HepG2 (cell line): ENCODE measurements at regions of chr9 and their contacts with region 1.

Region 1: GRCh38 chr9:116549061-116549664 is 137.9 kb upstream of the TRIM32 start:
- DNase-seq: peak; percentile 91
- ATAC-seq: peak; percentile 95
- H3K4me3 ChIP-seq: no peak overlapping the region
- H3K27ac ChIP-seq: peak overlapping the region; percentile 38
- H3K4me1 ChIP-seq: peaks cover 57% of the 10 kb centered on the region
- H3K27me3 ChIP-seq: no peaks in the 10 kb centered on the region
- CTCF ChIP-seq: 0 out of 2 replicates have a peak, but pooled peaks have one; percentile 20
- EP300 ChIP-seq: peak; percentile 71 to 75; a peak in 3 of 4 replicates
- POLR2A ChIP-seq: no peak
- RAD21 ChIP-seq: peak; percentile 51

Region 2: GRCh38 chr9:115367780-115368525 is 1181.2 kb before region 1 on chr9:
- CTCF ChIA-PET with region 1: no interaction called
- POLR2A ChIA-PET with region 1: no interaction called
- in situ Hi-C with region 1: no loop called
- intact Hi-C with region 1: no loop called
- DNase-seq: no peak
- ATAC-seq: no peak
- H3K4me3 ChIP-seq: no peak overlapping the region
- H3K27ac ChIP-seq: no peak overlapping the region
- H3K4me1 ChIP-seq: peaks cover 6% of the 10 kb centered on the region
- H3K27me3 ChIP-seq: no peaks in the 10 kb centered on the region
- CTCF ChIP-seq: no peak
- EP300 ChIP-seq: no peak
- POLR2A ChIP-seq: no peak
- RAD21 ChIP-seq: no peak

Region 3: GRCh38 chr9:116525611-116526010 is 23.6 kb before region 1 on chr9:
- CTCF ChIA-PET with region 1: no interaction called
- POLR2A ChIA-PET with region 1: interaction called, 5 read pairs
- in situ Hi-C with region 1: no loop called
- intact Hi-C with region 1: loop called (anchors 2 kb)
- DNase-seq: peak; percentile 25
- ATAC-seq: peak; percentile 75
- H3K4me3 ChIP-seq: no peak overlapping the region; a peak in 1 of 6 replicates
- H3K27ac ChIP-seq: no peak overlapping the region
- H3K4me1 ChIP-seq: peaks cover 30% of the 10 kb centered on the region
- H3K27me3 ChIP-seq: no peaks in the 10 kb centered on the region
- CTCF ChIP-seq: no peak
- EP300 ChIP-seq: no peak
- POLR2A ChIP-seq: no peak
- RAD21 ChIP-seq: no peak

Region 4: DNA sequence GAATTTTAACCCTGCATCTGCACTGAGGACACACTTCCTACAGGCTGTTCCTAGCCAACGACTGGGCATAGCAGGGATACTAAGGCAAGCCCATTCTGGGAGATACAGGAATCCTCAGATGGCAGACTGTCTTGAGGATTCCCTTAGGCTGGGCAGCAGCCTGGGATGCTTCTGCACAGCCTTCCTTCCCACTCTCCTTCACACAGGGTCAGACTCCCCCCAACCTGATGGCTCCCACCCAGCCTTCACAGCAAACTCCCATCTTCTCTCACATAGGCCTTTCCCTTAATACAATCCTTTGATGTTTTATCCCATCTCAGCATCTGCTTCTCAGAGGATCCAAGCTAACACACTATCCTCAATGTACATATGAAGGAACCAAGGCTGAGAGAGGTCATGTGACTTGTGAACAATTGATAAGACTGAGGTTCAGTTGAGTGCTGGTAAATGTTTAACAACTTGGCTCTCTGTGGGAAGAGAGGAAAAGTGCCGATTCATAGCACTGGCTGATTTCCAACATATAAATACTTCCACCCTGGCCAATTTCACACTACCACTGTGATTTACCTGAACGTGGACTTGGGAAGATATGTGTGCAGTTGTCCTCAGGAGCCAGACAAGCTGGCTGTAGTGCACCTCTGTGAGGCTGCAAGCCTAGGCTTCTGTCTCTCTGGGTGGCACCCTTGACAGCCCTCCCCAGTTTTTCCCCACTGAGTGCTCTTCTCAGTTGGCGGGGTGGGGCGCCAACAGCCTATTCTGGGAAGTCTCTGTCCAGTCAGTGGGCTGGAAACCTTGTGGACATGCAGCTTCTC is 17.7 kb after region 1 on chr9:
- CTCF ChIA-PET with region 1: no interaction called
- POLR2A ChIA-PET with region 1: interaction called, 19 read pairs
- in situ Hi-C with region 1: no loop called
- intact Hi-C with region 1: loop called (anchors 1 kb)
- DNase-seq: peak; percentile 96
- ATAC-seq: peak; percentile 96
- H3K4me3 ChIP-seq: peak overlapping the region in 1 of 3 experiments; percentile 47; a peak in 2 of 6 replicates
- H3K27ac ChIP-seq: peak overlapping the region; percentile 88
- H3K4me1 ChIP-seq: peaks cover 56% of the 10 kb centered on the region
- H3K27me3 ChIP-seq: no peaks in the 10 kb centered on the region
- CTCF ChIP-seq: no peak
- EP300 ChIP-seq: peak in 1 of 2 experiments; percentile 75; a peak in 2 of 4 replicates
- POLR2A ChIP-seq: peak in 1 of 2 experiments; percentile 55; a peak in 1 of 4 replicates
- RAD21 ChIP-seq: no peak; the same call in 1 of the 2 replicates

Region 5: GRCh38 chr9:116616304-116616914 is 67.2 kb after region 1 on chr9:
- CTCF ChIA-PET with region 1: no interaction called
- POLR2A ChIA-PET with region 1: no interaction called
- in situ Hi-C with region 1: no loop called
- intact Hi-C with region 1: no loop called
- DNase-seq: no peak
- ATAC-seq: no peak
- H3K4me3 ChIP-seq: no peak overlapping the region
- H3K27ac ChIP-seq: no peak overlapping the region
- H3K4me1 ChIP-seq: no peaks in the 10 kb centered on the region
- H3K27me3 ChIP-seq: no peaks in the 10 kb centered on the region
- CTCF ChIP-seq: no peak
- EP300 ChIP-seq: no peak
- POLR2A ChIP-seq: no peak
- RAD21 ChIP-seq: no peak

Region 6: GRCh38 chr9:116687074-116687753 is 138.1 kb after region 1 on chr9 and contains the start of gene TRIM32:
- CTCF ChIA-PET with region 1: no interaction called
- POLR2A ChIA-PET with region 1: no interaction called
- in situ Hi-C with region 1: no loop called
- intact Hi-C with region 1: no loop called
- DNase-seq: peak; percentile 86
- ATAC-seq: peak; percentile 98
- H3K4me3 ChIP-seq: peak within 1 kb of the TSS; percentile 81 to 91 (median 83)
- H3K27ac ChIP-seq: peak within 1 kb of the TSS; percentile 66
- H3K4me1 ChIP-seq: peaks cover 64% of the 10 kb centered on the region
- H3K27me3 ChIP-seq: no peaks in the 10 kb centered on the region; a peak in 1 of 5 replicates
- CTCF ChIP-seq: no peak
- EP300 ChIP-seq: no peak
- POLR2A ChIP-seq: peak; percentile 47 to 90; a peak in 3 of 4 replicates
- RAD21 ChIP-seq: no peak
- total RNA-seq, gene TRIM32: 7.7 and 11.6 TPM in 2 replicates